Naive thymus-derived CD4-positive, alpha-beta T cell (primary cell): ENCODE measurements at regions of chr2 and their contacts with region 1.

Region 1: GRCh38 chr2:201182650-201183364 is at the start of gene CASP10:
- DNase-seq: peak in 7 of 9 donors; percentile 67 to 83 (median 77)
- ATAC-seq: peak; percentile 90
- H3K4me3 ChIP-seq: peak within 1 kb of the TSS; percentile 68
- H3K4me3 Mint-ChIP-seq: peak within 1 kb of the TSS; percentile 87 to 99 (median 95)
- H3K27ac ChIP-seq: peak within 1 kb of the TSS; percentile 89
- H3K27ac Mint-ChIP-seq: peak within 1 kb of the TSS; percentile 86 to 98 (median 95)
- H3K4me1 ChIP-seq: peaks cover 22 to 24% of the 10 kb centered on the region in 2 donors
- H3K4me1 Mint-ChIP-seq: peaks cover 26 to 46% (median 29%) of the 10 kb centered on the region in 7 donors
- H3K27me3 ChIP-seq: no peaks in the 10 kb centered on the region
- H3K27me3 Mint-ChIP-seq: no peaks in the 10 kb centered on the region
- total RNA-seq, gene CASP10: 29.0 to 49.8 (median 42.9) TPM

Region 2: GRCh38 chr2:200811336-200812121 is 371.3 kb before region 1 on chr2 and contains the start of gene BZW1:
- CTCF ChIA-PET with region 1: no interaction called
- POLR2A ChIA-PET with region 1: interaction called, 5 read pairs
- intact Hi-C with region 1: loop called in 1 of 2 experiments (anchors 5 kb)
- DNase-seq: peak; percentile 92 to 99 (median 98)
- ATAC-seq: peak; percentile 91
- H3K4me3 ChIP-seq: peak within 1 kb of the TSS; percentile 89
- H3K4me3 Mint-ChIP-seq: peak within 1 kb of the TSS; percentile 89 to 99 (median 98)
- H3K27ac ChIP-seq: peak within 1 kb of the TSS; percentile 99
- H3K27ac Mint-ChIP-seq: peak within 1 kb of the TSS; percentile 91 to 99 (median 98)
- H3K4me1 ChIP-seq: peaks cover 19 to 24% of the 10 kb centered on the region in 2 donors
- H3K4me1 Mint-ChIP-seq: peaks cover 30 to 56% (median 48%) of the 10 kb centered on the region in 7 donors
- H3K27me3 ChIP-seq: no peaks in the 10 kb centered on the region
- H3K27me3 Mint-ChIP-seq: peaks cover 0 to 2% (median 0%) of the 10 kb centered on the region in 5 donors
- total RNA-seq, gene BZW1: 127 to 246 (median 207) TPM

Region 3: GRCh38 chr2:201071479-201072200 is 111.2 kb before region 1 on chr2 and contains the starts of genes HYCC2 and NDUFB3:
- CTCF ChIA-PET with region 1: interaction called, 8 read pairs
- POLR2A ChIA-PET with region 1: interaction called, 3 read pairs
- intact Hi-C with region 1: loop called in 1 of 2 experiments (anchors 2 kb)
- DNase-seq: peak; percentile 79 to 96 (median 95)
- ATAC-seq: peak; percentile 98
- H3K4me3 ChIP-seq: peak within 1 kb of the TSS; percentile 92
- H3K4me3 Mint-ChIP-seq: peak within 1 kb of the TSS; percentile 91 to 99 (median 94)
- H3K27ac ChIP-seq: peak within 1 kb of the TSS; percentile 83
- H3K27ac Mint-ChIP-seq: peak within 1 kb of the TSS; percentile 86 to 99 (median 95)
- H3K4me1 ChIP-seq: peaks cover 32 to 36% of the 10 kb centered on the region in 2 donors
- H3K4me1 Mint-ChIP-seq: peaks cover 31 to 74% (median 55%) of the 10 kb centered on the region in 7 donors
- H3K27me3 ChIP-seq: no peaks in the 10 kb centered on the region
- H3K27me3 Mint-ChIP-seq: no peaks in the 10 kb centered on the region
- total RNA-seq, gene HYCC2: 34.8 to 38.3 (median 36.1) TPM
- total RNA-seq, gene NDUFB3: 18.3 to 109 (median 38.3) TPM

Region 4: DNA sequence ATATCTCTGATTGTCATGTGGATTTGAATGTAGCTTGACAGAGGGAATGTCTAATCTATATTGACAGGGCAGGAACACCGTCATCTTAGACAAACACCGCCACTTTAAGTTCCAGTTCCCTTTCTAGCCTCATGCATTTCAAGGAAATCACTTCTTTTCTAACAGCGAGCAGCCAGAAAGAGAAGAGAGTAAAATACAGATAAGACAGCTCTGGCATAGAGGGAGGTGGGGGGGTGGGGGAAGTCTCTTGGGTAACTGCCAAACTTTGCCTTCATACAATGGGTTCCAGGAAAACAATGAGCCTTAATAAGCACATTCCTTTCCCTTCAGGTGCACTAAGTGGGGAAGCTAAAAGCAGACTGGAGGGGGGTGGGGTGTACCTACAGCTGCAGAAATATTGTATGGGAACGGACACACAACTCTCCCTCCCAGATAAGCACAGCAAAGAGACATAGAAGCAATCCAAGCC is 37.3 kb after region 1 on chr2:
- CTCF ChIA-PET with region 1: interaction called, 10 read pairs
- POLR2A ChIA-PET with region 1: interaction called, 5 read pairs
- intact Hi-C with region 1: no loop called
- DNase-seq: no peak
- ATAC-seq: no peak
- H3K4me3 ChIP-seq: no peak overlapping the region
- H3K4me3 Mint-ChIP-seq: peak overlapping the region; percentile 6 to 77 (median 42)
- H3K27ac ChIP-seq: peak overlapping the region; percentile 62
- H3K27ac Mint-ChIP-seq: peak overlapping the region; percentile 61 to 97 (median 90)
- H3K4me1 ChIP-seq: peaks cover 0 to 44% of the 10 kb centered on the region in 2 donors
- H3K4me1 Mint-ChIP-seq: peaks cover 28 to 78% (median 71%) of the 10 kb centered on the region in 7 donors
- H3K27me3 ChIP-seq: no peaks in the 10 kb centered on the region
- H3K27me3 Mint-ChIP-seq: no peaks in the 10 kb centered on the region

Region 5: DNA sequence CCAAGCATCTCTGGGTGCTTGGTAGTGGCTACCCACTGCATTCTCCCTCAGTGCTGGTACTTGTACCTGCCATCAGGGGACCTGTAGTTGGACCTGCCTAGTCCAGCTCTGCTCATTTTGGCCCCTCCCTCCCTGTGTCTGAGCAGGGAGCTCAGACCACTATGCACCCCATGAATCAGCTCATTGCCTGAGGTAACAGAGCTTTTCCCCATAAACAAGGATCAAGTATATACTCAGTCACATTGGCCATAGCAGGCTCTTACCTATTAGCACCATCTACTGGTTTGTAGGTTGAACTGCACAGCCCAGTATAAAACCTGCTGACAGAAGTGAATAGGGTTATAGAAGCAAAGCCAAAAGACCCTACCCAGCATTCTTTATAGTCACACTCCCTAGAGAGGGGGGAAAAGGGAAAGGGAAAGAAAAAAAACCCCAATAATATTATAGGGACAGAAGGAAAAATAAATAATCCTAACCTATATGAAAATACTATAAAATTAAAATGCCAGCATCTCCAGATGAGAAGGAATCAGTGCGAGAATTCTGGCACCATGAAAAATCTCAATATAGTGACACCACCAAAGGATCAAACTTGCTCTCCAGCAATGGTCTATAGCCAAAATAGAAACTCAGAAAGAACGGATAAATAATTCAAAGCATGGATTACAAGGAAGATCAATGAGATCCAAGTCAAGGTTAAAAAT is 181.2 kb after region 1 on chr2:
- CTCF ChIA-PET with region 1: interaction called, 10 read pairs
- POLR2A ChIA-PET with region 1: no interaction called
- intact Hi-C with region 1: loop called (anchors 1 to 2 kb)
- DNase-seq: peak in 7 of 9 donors; percentile 21 to 64 (median 61)
- ATAC-seq: peak; percentile 96
- H3K4me3 ChIP-seq: no peak overlapping the region
- H3K4me3 Mint-ChIP-seq: peak overlapping the region in 5 of 10 donors; percentile 11 to 49 (median 32)
- H3K27ac ChIP-seq: no peak overlapping the region
- H3K27ac Mint-ChIP-seq: peak overlapping the region in 7 of 9 donors; percentile 9 to 84 (median 75)
- H3K4me1 ChIP-seq: peaks cover 0 to 24% of the 10 kb centered on the region in 2 donors
- H3K4me1 Mint-ChIP-seq: peaks cover 11 to 45% (median 41%) of the 10 kb centered on the region in 7 donors
- H3K27me3 ChIP-seq: no peaks in the 10 kb centered on the region
- H3K27me3 Mint-ChIP-seq: no peaks in the 10 kb centered on the region

Region 6: DNA sequence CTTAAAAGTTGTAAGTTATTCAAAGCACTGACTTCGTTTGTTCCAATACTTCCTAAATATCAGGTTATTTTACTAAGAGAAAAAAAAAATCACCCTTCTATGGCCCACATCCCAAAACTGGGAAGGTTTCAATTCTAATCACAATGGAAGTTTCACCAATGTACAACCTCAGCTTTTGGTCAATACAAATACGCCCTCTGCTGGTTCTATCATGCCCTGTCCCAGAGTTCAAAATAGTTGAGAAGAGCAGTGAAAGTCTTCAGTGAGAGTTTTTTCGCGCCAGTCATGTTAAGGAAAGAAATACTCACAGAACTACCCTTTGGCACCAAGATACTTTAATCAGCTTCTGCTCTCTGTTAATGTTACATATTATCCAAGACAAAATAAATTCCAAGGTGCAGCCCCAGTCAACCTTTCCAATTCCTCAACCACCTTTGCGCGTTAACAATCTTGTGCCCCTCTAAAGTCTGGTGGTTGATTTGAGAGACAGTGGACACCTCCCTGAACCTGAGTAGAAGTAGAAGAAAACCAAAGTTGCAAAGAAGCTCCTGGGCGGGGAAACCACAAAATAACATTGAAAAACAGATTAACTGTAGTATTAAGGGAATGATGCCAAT is 995.6 kb after region 1 on chr2:
- CTCF ChIA-PET with region 1: interaction called, 3 read pairs
- POLR2A ChIA-PET with region 1: no interaction called
- intact Hi-C with region 1: loop called in 1 of 2 experiments (anchors 1 kb)
- DNase-seq: peak in 8 of 9 donors; percentile 25 to 64 (median 50)
- ATAC-seq: peak; percentile 80
- H3K4me3 ChIP-seq: no peak overlapping the region
- H3K4me3 Mint-ChIP-seq: no peak overlapping the region
- H3K27ac ChIP-seq: no peak overlapping the region
- H3K27ac Mint-ChIP-seq: no peak overlapping the region
- H3K4me1 ChIP-seq: no peaks in the 10 kb centered on the region
- H3K4me1 Mint-ChIP-seq: peaks cover 0 to 14% (median 0%) of the 10 kb centered on the region in 7 donors
- H3K27me3 ChIP-seq: no peaks in the 10 kb centered on the region
- H3K27me3 Mint-ChIP-seq: peaks cover 0 to 19% (median 0%) of the 10 kb centered on the region in 5 donors